ENCODE measurements at regions of chr4 and their contacts with region 1.

Region 1: GRCh38 chr4:134470544-134470943 is 269.0 kb upstream of the PABPC4L start:
- DNase-seq: peak; percentile 35
- H3K4me3 ChIP-seq: no peak overlapping the region
- H3K27ac ChIP-seq: no peak overlapping the region
- H3K4me1 ChIP-seq: no peaks in the 10 kb centered on the region
- H3K27me3 ChIP-seq: no peaks in the 10 kb centered on the region
- CTCF ChIP-seq: peak; percentile 49

Region 2: GRCh38 chr4:134687646-134688628 is 217.4 kb after region 1 on chr4:
- CTCF ChIA-PET with region 1: no interaction called
- POLR2A ChIA-PET with region 1: no interaction called
- intact Hi-C with region 1: no loop called
- DNase-seq: no peak
- H3K4me3 ChIP-seq: no peak overlapping the region
- H3K27ac ChIP-seq: no peak overlapping the region
- H3K4me1 ChIP-seq: no peaks in the 10 kb centered on the region
- H3K27me3 ChIP-seq: no peaks in the 10 kb centered on the region
- CTCF ChIP-seq: no peak

Region 3: DNA sequence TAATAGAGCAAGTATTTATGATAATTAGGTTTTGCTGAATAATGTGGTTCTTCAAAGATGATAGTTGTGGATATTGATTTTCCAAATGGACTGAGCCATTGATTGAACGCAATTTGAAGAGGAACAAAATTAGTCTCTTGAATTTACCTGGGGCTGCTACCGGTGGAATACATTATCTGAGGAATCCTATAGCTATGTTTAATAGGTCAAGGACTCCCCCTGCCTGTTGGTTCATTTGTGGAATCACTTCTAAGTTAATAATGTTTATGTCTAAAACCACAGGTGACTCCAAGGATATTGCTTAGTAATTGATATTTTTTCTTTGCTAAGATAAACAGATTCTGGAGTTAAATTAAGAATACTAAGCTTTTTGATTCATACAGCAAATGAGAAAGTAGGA is 307.1 kb after region 1 on chr4:
- CTCF ChIA-PET with region 1: no interaction called
- POLR2A ChIA-PET with region 1: no interaction called
- intact Hi-C with region 1: no loop called
- DNase-seq: no peak
- H3K4me3 ChIP-seq: no peak overlapping the region
- H3K27ac ChIP-seq: no peak overlapping the region
- H3K4me1 ChIP-seq: no peaks in the 10 kb centered on the region
- H3K27me3 ChIP-seq: no peaks in the 10 kb centered on the region
- CTCF ChIP-seq: no peak; the same call in 1 of the 2 replicates

Region 4: DNA sequence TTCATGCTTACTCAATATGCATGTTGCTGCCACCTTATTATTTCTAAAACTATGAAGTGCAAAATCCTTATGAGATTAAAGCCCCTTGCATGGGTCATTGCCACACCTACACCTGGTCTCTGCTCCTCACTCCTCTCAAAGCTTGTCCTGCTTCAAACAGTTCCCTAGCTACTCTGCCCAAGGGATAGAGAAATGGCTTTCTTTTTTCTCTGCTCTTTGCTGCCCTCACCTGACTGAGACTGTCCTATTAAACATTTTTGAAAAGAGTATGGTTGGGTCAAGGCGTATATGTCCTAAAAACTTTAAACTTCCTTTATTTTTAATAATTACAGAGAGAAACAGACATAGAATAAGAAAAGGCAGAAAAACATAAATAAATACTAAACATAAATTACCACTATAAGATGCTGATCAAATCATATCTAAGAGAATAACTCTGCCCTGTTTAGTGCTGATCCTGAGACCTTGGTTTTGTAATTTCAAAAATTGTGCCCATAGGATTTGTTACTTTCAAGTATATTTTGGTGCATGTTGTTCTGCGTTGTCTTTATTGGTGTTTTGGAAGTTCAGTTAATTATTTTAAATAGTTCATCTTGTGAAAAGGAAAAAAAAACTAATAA is 436.0 kb after region 1 on chr4:
- CTCF ChIA-PET with region 1: no interaction called
- POLR2A ChIA-PET with region 1: no interaction called
- intact Hi-C with region 1: loop called (anchors 2 kb)
- DNase-seq: peak; percentile 18
- H3K4me3 ChIP-seq: no peak overlapping the region
- H3K27ac ChIP-seq: no peak overlapping the region
- H3K4me1 ChIP-seq: no peaks in the 10 kb centered on the region
- H3K27me3 ChIP-seq: no peaks in the 10 kb centered on the region
- CTCF ChIP-seq: peak; percentile 60